Activated naive CD4-positive, alpha-beta T cell treated with anti-CD3 and anti-CD28 coated beads for 36 hours (primary cell): ENCODE measurements at regions of chr22 and their contacts with region 1.

Region 1: GRCh38 chr22:17830043-17830961 is 56.0 kb upstream of the BID start:
- DNase-seq: peak; percentile 90
- H3K4me3 Mint-ChIP-seq: no peak overlapping the region
- H3K27ac Mint-ChIP-seq: no peak overlapping the region
- H3K4me1 Mint-ChIP-seq: peaks cover 3% of the 10 kb centered on the region
- H3K27me3 Mint-ChIP-seq: no peaks in the 10 kb centered on the region

Region 2: GRCh38 chr22:17258015-17258787 is 572.1 kb before region 1 on chr22:
- CTCF ChIA-PET with region 1: no interaction called
- intact Hi-C with region 1: no loop called
- DNase-seq: peak; percentile 76
- H3K4me3 Mint-ChIP-seq: no peak overlapping the region
- H3K27ac Mint-ChIP-seq: peak overlapping the region; percentile 50
- H3K4me1 Mint-ChIP-seq: peaks cover 25% of the 10 kb centered on the region
- H3K27me3 Mint-ChIP-seq: no peaks in the 10 kb centered on the region

Region 3: DNA sequence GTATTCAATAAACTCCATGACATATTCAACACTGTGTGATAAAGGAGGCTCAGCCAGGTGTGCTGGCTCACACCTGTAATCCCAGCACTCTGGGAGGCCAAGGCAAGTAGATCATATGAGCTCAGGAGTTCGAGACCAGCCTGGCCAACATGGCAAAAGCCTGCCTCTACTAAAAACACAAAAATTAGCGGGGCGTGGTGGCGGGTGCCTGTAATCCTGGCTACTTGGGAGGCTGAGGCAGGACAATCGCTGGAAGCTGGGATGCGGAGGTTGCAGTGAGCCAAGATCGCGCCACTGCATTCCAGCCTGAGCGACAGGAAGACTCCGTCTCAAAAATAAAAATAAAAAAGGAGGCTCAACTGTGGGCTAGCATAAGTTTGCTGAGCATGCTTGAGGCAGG is 271.1 kb before region 1 on chr22:
- CTCF ChIA-PET with region 1: no interaction called
- intact Hi-C with region 1: loop called (anchors 2 kb)
- DNase-seq: no peak
- H3K4me3 Mint-ChIP-seq: no peak overlapping the region
- H3K27ac Mint-ChIP-seq: no peak overlapping the region
- H3K4me1 Mint-ChIP-seq: no peaks in the 10 kb centered on the region
- H3K27me3 Mint-ChIP-seq: no peaks in the 10 kb centered on the region

Region 4: DNA sequence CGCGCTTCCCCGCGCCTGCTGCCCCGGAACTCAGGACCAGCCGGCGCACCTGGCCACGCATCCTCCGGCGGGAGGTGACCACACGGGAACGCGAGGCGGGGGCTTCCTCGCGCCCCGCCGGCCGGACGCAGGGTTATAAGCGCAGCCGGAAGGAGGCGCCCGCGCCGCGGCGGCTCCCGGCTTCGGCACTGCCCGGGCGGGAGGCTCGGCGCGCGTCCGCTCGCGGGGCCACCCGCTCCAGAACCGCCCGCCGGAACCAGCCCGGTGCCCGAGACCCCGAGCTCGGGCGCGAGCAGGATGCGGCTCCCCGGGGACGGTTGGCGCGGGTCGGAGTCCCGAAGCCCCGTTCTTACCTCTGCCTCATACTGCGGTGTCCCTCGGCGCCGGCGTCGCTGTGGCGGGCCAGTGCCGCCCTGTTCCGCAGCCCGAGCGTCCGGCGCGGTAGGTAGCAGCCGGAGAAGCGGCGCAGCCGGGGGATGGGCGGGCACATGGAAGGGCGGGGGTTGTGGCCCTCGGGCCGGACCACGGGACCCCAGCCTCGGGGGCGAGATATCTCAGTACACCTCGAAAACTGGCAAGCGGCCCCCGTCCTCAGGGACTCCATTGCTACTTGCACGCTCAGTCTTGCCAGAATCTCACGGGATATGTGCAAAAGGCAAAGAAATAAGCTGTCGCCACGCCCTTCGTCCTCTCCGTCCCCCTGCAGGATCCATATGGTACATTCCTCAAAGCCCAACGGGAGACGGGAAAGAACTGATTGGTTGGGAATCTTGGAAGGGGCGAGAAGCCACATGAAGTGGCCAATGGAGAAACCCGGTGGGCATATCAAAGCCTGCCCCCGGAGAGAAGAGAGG is 171.0 kb after region 1 on chr22:
- CTCF ChIA-PET with region 1: interaction called, 3 read pairs
- intact Hi-C with region 1: loop called (anchors 1 kb)
- DNase-seq: peak; percentile 77
- H3K4me3 Mint-ChIP-seq: peak overlapping the region; percentile 91
- H3K27ac Mint-ChIP-seq: peak overlapping the region; percentile 93
- H3K4me1 Mint-ChIP-seq: peaks cover 43% of the 10 kb centered on the region
- H3K27me3 Mint-ChIP-seq: peaks cover 5% of the 10 kb centered on the region

Region 5: GRCh38 chr22:18024276-18024947 is 194.1 kb after region 1 on chr22 and contains the start of gene MICAL3:
- CTCF ChIA-PET with region 1: interaction called, 9 read pairs
- intact Hi-C with region 1: loop called (anchors 1 kb)
- DNase-seq: peak; percentile 63
- H3K4me3 Mint-ChIP-seq: peak within 1 kb of the TSS; percentile 84
- H3K27ac Mint-ChIP-seq: no peak within 1 kb of the TSS
- H3K4me1 Mint-ChIP-seq: peaks cover 10% of the 10 kb centered on the region
- H3K27me3 Mint-ChIP-seq: peaks cover 27% of the 10 kb centered on the region
- total RNA-seq, gene MICAL3: 21.0 to 25.8 TPM

Region 6: DNA sequence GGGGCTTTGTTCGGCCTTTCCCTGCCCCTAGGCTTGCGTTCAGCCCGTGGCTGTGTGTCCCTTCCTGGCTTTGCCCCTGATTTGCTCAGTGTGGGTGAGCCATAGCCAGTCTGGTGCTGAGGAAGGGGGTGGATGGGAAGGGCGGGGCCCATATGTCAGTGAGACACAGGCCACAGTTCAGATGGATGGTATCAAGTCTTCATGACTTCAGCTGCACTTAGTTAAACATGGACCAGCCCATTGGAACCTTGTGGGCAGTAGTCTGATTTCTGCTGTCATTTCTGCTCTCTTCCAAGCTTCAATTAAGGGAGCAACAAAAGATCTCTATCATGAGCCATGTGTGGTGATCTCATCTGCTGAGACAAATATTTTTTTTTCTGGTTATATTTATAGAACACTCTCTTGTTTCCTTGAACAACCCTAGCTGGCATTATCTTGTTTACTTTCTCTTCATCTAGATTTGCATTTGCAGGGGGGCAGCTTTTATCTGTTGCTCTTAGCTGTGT is 225.9 kb after region 1 on chr22:
- CTCF ChIA-PET with region 1: no interaction called
- intact Hi-C with region 1: no loop called
- DNase-seq: no peak
- H3K4me3 Mint-ChIP-seq: no peak overlapping the region
- H3K27ac Mint-ChIP-seq: no peak overlapping the region
- H3K4me1 Mint-ChIP-seq: no peaks in the 10 kb centered on the region
- H3K27me3 Mint-ChIP-seq: no peaks in the 10 kb centered on the region